Activated CD4-positive, alpha-beta T cell treated with anti-CD3 and anti-CD28 coated beads, Interleukin-2, amount 10 ng/mL, durations not matched to agents 24 days and 14 days (primary cell): ENCODE measurements at regions of chr12 and their contacts with region 1.

Region 1: DNA sequence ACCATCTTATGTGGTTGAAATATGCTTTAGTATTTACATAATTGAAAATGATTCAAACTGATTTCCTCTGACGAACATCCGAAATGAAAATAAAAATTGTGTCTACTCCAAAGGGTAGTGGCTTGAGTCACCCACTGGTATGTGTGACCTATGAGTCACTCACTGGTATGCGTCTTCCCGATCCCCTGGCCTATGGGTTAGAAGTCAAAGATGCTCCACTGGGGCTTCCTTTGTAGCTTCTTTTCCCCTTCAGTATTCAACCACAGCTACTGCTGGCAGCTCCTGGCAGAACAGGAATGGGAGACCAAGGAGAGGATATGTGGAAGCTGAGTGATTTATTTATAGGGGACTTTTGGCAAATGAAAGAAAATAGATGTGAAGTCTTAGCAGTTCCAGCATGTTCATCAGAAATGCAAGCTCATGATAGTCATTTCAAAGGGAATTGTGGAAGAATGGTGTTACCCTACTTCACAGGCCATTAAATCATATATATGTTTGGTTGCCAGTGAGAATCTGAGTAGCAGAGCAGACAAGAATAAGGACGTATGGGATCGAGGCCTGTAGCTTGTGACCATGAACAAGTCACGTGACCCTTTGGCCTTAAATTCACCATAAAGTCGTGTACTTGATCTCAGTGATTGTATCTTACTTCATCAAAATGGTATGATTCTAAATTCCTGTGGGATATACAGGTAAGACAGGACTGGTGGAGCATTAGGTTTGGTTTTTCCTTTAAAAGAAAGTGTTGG is 108.3 kb downstream of the CRADD start:
- DNase-seq: peak; percentile 84
- H3K4me3 Mint-ChIP-seq: peak overlapping the region; percentile 39
- H3K27ac Mint-ChIP-seq: peak overlapping the region; percentile 88
- H3K4me1 Mint-ChIP-seq: peaks cover 53% of the 10 kb centered on the region
- H3K27me3 Mint-ChIP-seq: no peaks in the 10 kb centered on the region

Region 2: GRCh38 chr12:93677195-93678064 is 108.0 kb before region 1 on chr12 and contains the start of gene CRADD:
- intact Hi-C with region 1: loop called (anchors 2 kb)
- DNase-seq: peak; percentile 96
- H3K4me3 Mint-ChIP-seq: peak within 1 kb of the TSS; percentile 96
- H3K27ac Mint-ChIP-seq: peak within 1 kb of the TSS; percentile 99
- H3K4me1 Mint-ChIP-seq: peaks cover 37% of the 10 kb centered on the region
- H3K27me3 Mint-ChIP-seq: peaks cover 4% of the 10 kb centered on the region
- total RNA-seq, gene CRADD: 8.1 and 12.6 TPM in 2 replicates

Region 3: DNA sequence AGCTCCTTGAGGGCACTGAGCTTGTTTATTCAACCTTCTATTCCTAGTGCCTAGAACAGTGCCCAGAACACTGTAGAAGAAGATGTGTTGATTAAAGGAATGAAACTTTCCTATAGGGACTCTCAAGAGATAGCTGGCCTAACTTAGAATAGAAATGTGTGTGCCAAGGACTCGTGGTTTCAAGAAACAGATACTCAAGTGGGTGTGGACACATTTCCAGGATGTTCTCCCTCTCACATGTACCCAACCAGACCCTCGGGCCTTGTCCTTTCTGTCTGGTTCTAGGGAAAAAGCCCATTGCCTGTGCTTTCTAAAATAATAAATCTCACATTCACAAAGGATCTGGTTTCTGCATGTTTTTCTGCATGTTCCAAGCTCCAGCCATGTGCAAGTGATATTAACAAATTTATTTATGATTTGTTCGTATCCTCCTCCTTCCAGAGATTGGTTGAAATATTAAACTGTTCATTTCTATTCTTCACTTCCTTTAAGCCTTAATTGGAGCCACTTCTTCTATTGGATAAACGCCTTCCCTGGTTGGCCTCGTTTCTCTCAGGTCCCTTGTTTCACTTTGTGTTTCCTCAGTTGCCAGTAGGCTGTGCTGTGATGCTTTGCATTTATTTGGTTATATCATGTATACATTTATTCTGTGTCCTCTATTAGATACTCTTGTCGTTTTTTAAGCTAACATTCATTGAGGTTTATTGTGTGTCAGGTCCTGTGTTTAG is 18.5 kb before region 1 on chr12:
- intact Hi-C with region 1: loop called (anchors 2 kb)
- DNase-seq: peak; percentile 85
- H3K4me3 Mint-ChIP-seq: peak overlapping the region; percentile 31
- H3K27ac Mint-ChIP-seq: no peak overlapping the region
- H3K4me1 Mint-ChIP-seq: peaks cover 40% of the 10 kb centered on the region
- H3K27me3 Mint-ChIP-seq: no peaks in the 10 kb centered on the region

Region 4: GRCh38 chr12:93847517-93848474 is 62.4 kb after region 1 on chr12:
- intact Hi-C with region 1: loop called (anchors 1 kb)
- DNase-seq: peak; percentile 73
- H3K4me3 Mint-ChIP-seq: peak overlapping the region; percentile 43
- H3K27ac Mint-ChIP-seq: peak overlapping the region; percentile 62
- H3K4me1 Mint-ChIP-seq: peaks cover 48% of the 10 kb centered on the region
- H3K27me3 Mint-ChIP-seq: no peaks in the 10 kb centered on the region

Region 5: GRCh38 chr12:93979189-93979588 is 193.8 kb after region 1 on chr12:
- intact Hi-C with region 1: loop called (anchors 2 kb)
- DNase-seq: peak; percentile 80
- H3K4me3 Mint-ChIP-seq: no peak overlapping the region
- H3K27ac Mint-ChIP-seq: no peak overlapping the region
- H3K4me1 Mint-ChIP-seq: peaks cover 34% of the 10 kb centered on the region
- H3K27me3 Mint-ChIP-seq: peaks cover 6% of the 10 kb centered on the region